ENCODE measurements at regions of chr6 and their contacts with region 1.

Region 1: GRCh38 chr6:31493875-31494694 is 3.9 kb upstream of the MICB start:
- DNase-seq: peak; percentile 63
- H3K4me3 ChIP-seq: peak overlapping the region; percentile 65 to 73 (median 71)
- H3K27ac ChIP-seq: peak overlapping the region; percentile 79
- H3K4me1 ChIP-seq: peaks cover 23% of the 10 kb centered on the region
- H3K27me3 ChIP-seq: no peaks in the 10 kb centered on the region
- CTCF ChIP-seq: peak; percentile 77 to 95

Region 2: DNA sequence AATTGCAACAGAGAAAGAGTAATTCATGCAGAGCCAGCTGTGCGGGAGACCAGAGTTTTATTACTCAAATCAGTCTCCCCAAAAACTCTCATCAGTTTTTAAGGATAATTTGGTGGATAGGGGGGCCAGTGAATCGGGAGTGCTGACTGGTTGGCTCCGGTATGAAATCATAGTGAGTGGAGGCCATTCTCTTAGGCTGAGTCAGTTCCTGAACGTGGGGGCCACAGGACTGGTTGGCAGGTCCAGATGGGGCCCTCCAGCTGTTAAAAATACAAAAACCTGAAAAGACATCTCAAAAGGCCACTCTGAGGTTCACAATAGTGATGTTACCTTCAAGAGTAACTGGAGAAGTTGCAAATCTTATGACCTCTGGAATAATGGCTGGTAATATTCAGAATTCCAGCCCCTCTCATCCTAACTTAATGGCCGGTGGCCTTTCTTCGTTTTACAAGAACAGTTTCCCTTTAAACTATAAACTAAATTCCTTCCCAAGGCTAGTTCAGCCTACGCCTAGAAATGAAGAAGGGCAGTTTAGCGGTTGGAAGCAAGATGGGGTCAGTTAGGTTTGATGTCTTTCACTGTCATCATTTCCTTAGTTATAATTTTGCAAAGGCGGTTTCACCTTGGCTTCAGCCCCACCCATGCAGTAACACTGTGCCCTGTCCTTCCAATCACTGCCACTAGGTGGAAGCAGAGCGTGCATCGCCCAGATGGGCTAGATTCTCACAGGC is 97.5 kb before region 1 on chr6:
- CTCF ChIA-PET with region 1: no interaction called
- dilution Hi-C with region 1: no loop called
- in situ Hi-C with region 1: no loop called
- intact Hi-C with region 1: loop called (anchors 2 kb)
- DNase-seq: peak; percentile 67
- H3K4me3 ChIP-seq: no peak overlapping the region
- H3K27ac ChIP-seq: no peak overlapping the region
- H3K4me1 ChIP-seq: peaks cover 1% of the 10 kb centered on the region
- H3K27me3 ChIP-seq: no peaks in the 10 kb centered on the region
- CTCF ChIP-seq: peak; percentile 80 to 85

Region 3: DNA sequence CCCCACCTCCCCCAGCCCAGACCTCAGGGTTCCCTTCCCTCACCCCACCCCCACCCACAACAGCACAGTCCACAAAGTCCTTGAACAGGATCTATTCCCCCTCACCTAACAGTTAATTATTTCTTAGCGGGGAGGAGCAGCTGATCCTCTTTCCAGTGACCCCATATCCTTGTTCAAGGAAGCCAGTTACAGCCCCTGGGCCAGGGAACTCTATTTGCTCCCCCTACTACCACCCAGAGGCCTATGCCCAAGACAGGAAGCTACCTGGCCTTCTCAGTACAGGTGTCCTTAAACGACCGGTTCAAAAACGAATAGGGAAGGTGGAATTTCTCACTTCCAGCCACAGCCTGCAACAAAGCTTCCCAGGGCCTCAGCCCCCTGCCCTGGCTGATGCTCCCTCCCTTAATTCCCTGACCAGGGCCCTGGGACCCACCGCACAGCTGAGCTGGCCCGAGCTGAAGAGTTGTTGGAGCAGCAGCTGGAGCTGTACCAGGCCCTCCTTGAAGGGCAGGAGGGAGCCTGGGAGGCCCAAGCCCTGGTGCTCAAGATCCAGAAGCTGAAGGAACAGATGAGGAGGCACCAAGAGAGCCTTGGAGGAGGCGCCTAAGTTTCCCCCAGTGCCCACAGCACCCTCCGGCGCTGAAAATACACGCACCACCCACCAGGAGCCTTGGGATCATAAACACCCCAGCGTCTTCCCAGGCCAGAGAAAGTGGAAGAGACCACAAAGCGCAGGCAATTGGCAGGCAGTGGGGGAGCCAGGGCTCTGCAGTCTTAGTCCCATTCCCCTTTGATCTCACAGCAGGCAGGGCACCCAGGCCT is 35.5 kb after region 1 on chr6:
- CTCF ChIA-PET with region 1: no interaction called
- dilution Hi-C with region 1: no loop called
- in situ Hi-C with region 1: no loop called
- intact Hi-C with region 1: loop called (anchors 2 kb)
- DNase-seq: no peak
- H3K4me3 ChIP-seq: no peak overlapping the region
- H3K27ac ChIP-seq: no peak overlapping the region
- H3K4me1 ChIP-seq: peaks cover 9% of the 10 kb centered on the region
- H3K27me3 ChIP-seq: no peaks in the 10 kb centered on the region
- CTCF ChIP-seq: no peak

Region 4: GRCh38 chr6:31580807-31581433 is 86.8 kb after region 1 on chr6:
- CTCF ChIA-PET with region 1: no interaction called
- dilution Hi-C with region 1: no loop called
- in situ Hi-C with region 1: no loop called
- intact Hi-C with region 1: loop called (anchors 5 kb)
- DNase-seq: peak; percentile 66
- H3K4me3 ChIP-seq: peak overlapping the region; percentile 72 to 92 (median 85)
- H3K27ac ChIP-seq: peak overlapping the region; percentile 61
- H3K4me1 ChIP-seq: peaks cover 21% of the 10 kb centered on the region
- H3K27me3 ChIP-seq: no peaks in the 10 kb centered on the region
- CTCF ChIP-seq: peak; percentile 75 to 96

Region 5: GRCh38 chr6:31597006-31597405 is 102.9 kb after region 1 on chr6:
- CTCF ChIA-PET with region 1: interaction called, 4 read pairs
- dilution Hi-C with region 1: no loop called
- in situ Hi-C with region 1: loop called in 1 of 2 experiments (anchors 5 kb)
- intact Hi-C with region 1: loop called (anchors 1 kb)
- DNase-seq: no peak
- H3K4me3 ChIP-seq: no peak overlapping the region
- H3K27ac ChIP-seq: no peak overlapping the region
- H3K4me1 ChIP-seq: no peaks in the 10 kb centered on the region
- H3K27me3 ChIP-seq: no peaks in the 10 kb centered on the region
- CTCF ChIP-seq: peak; percentile 26 to 27